ENCODE measurements at regions of chr16 and their contacts with region 1.

Region 1: DNA sequence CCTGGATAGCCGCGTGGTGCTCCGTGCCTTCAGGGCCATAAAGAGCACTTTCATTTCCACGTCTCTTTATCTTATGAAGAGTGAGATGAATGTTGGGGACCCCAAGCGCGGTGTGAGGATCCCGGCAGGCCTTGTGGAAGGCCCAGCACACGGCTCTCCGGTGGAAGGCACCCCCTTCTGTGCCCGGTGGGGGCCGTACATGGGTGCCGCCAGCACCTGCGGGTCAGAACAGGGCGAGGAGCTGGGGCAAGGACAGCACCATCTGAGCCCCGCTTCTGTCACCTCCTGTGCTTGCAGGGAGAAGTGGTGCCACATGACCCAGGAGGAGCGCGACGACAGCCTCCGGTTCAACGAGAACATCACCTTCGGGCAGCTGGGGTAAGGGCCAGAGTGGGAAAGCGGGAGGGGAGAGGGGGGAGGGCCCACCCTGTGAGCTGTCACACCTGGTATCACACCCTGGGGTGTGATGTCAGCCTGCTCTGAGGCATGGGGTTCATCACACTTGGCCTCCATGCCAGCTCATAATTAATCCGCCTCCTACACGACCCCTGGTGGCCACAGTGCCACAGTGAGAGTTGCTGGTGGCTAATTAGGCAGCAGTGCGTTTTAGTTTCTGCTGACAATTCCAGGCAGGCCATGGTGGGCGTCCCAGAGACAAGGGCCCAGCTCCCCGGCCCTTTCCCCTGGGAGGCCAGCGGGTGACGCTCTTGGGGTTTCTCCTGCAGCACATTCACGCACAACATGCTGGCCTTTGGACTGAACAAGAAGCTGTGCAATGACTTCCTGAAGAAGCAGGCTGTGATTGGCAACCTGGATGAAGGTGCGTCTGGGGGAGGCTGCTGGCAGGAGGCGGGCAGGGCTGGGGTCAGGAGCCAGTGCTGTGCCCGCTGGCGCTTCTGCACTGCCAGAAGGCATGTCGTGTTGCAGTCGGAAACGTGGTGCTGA is 25.7 kb downstream of the CIBAR2 start:
- DNase-seq: peak; percentile 86
- ATAC-seq: peak; percentile 34
- H3K4me3 Mint-ChIP-seq: no peak overlapping the region
- H3K27ac Mint-ChIP-seq: no peak overlapping the region
- H3K4me1 Mint-ChIP-seq: peaks cover 42% of the 10 kb centered on the region
- H3K27me3 Mint-ChIP-seq: peaks cover 52% of the 10 kb centered on the region
- CTCF ChIP-seq: peak; percentile 85

Region 2: GRCh38 chr16:84687715-84688114 is 398.9 kb before region 1 on chr16:
- CTCF ChIA-PET with region 1: no interaction called
- POLR2A ChIA-PET with region 1: no interaction called
- DNase-seq: no peak
- ATAC-seq: no peak
- H3K4me3 Mint-ChIP-seq: no peak overlapping the region
- H3K27ac Mint-ChIP-seq: no peak overlapping the region
- H3K4me1 Mint-ChIP-seq: peaks cover 21% of the 10 kb centered on the region
- H3K27me3 Mint-ChIP-seq: peaks cover 3% of the 10 kb centered on the region; the same call in 1 of the 2 replicates
- CTCF ChIP-seq: no peak

Region 3: DNA sequence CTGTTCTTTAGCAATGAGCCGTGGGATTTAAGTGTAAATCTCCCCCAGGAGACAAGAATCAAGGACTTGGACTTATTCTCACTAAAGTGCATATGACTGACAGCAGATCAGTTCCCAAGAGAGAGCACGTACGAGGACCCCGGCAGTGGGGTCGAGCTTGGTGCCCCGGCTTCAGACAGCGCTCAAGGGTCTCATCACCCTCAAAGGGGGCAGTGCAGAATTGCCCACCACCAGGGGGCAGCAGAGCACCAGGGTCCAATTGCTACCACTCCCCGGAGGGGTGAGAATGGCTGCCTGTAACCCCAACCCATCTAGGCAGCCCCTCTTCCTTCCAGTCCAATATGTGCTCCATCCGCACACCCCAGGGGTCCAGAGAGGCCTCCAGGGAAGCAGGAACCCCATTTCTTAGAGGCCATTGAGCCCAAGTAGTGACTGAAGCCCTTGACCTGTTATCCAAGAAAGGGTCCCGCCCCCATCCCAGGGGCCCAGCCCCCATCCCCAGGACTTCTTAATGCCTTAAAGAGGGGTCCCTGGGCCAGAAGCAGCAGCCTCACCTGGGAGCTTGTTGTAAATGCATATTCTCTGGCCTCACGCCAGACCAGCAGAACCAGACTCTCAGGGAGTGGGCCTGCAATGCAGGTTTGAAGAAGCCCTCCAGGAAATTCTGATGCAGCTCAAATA is 161.4 kb before region 1 on chr16:
- CTCF ChIA-PET with region 1: interaction called, 12 read pairs
- POLR2A ChIA-PET with region 1: no interaction called
- DNase-seq: peak; percentile 94
- ATAC-seq: peak; percentile 87
- H3K4me3 Mint-ChIP-seq: no peak overlapping the region
- H3K27ac Mint-ChIP-seq: 0 out of 2 replicates have a peak overlapping the region, but pooled peaks have one; percentile 70
- H3K4me1 Mint-ChIP-seq: peaks cover 14% of the 10 kb centered on the region
- H3K27me3 Mint-ChIP-seq: no peaks in the 10 kb centered on the region
- CTCF ChIP-seq: peak; percentile 96

Region 4: DNA sequence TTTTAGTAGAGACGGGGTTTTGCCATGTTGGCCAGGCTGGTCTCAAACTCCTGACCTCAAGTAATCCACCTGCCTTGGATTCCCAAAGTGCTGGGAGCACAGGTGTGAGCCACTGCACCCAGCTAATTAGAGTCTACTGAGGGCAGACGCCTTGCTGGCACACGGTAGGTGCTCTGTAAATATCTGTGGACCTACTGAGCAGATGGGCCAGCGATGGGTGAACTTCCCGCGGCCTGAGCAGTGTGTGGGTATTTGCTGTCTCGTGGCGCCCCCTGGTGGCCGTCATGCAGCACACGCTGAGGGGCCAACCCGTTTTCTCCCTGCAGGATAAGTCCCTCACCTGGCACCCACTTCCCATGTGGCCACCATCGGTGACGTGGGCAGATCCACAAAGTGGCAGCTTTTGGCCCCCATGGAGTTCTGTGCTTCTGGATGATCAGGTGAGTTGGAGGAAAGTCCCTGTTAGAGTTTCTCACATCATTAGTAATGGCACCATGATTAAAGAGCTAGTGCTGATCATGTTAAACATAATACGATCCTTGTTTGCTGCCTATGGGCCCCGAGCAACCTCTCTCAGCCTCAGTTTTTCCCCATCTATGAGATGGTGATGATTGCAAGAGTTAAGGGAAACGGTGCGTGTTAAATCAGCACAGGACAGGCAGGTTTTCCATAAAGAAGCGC is 116.0 kb before region 1 on chr16:
- CTCF ChIA-PET with region 1: interaction called, 15 read pairs
- POLR2A ChIA-PET with region 1: no interaction called
- DNase-seq: peak; percentile 88
- ATAC-seq: peak; percentile 96
- H3K4me3 Mint-ChIP-seq: no peak overlapping the region
- H3K27ac Mint-ChIP-seq: no peak overlapping the region
- H3K4me1 Mint-ChIP-seq: no peaks in the 10 kb centered on the region
- H3K27me3 Mint-ChIP-seq: no peaks in the 10 kb centered on the region
- CTCF ChIP-seq: peak; percentile 98

Region 5: GRCh38 chr16:85010931-85011845 is 75.4 kb before region 1 on chr16 and contains the start of gene ZDHHC7:
- CTCF ChIA-PET with region 1: interaction called, 13 read pairs
- POLR2A ChIA-PET with region 1: no interaction called
- DNase-seq: peak; percentile 87
- ATAC-seq: peak; percentile 92
- H3K4me3 Mint-ChIP-seq: peak within 1 kb of the TSS; percentile 97
- H3K27ac Mint-ChIP-seq: peak within 1 kb of the TSS; percentile 99
- H3K4me1 Mint-ChIP-seq: peaks cover 9% of the 10 kb centered on the region
- H3K27me3 Mint-ChIP-seq: no peaks in the 10 kb centered on the region
- CTCF ChIP-seq: no peak
- total RNA-seq, gene ZDHHC7: 35.7 to 38.7 TPM (median 38.1 TPM) in 3 replicates

Region 6: DNA sequence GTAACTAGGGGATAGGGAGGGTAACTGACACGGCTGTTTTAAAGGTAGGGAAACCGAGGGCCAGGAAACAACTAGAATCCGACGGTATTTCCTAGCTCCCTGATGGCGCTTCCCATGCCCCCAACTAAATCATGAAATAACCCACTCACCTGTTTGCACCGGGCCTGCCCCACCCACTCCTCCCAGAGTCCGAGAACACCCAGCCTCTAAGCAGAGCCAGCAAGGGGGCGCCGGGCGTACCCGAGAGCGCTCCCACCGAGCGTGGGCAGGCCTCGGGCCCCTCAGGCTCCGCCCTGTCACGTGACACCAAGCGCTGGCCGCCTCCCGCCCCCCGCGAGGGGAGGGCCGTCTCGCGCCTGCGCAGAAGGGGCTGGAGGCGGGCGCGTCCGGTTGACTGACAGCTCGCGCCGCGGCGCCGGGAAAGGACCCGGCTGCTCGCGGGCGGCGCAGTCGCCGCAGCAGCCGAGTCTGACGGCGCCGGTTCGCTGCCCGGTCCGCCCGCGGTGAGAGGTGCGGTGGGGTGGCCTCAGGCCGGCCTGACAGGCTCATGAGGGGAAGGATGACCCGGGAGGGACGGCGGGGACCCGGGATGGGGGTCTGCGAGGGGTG is 59.2 kb before region 1 on chr16 and contains the start of gene KIAA0513:
- CTCF ChIA-PET with region 1: interaction called, 21 read pairs
- POLR2A ChIA-PET with region 1: interaction called, 3 read pairs
- DNase-seq: peak; percentile 91
- ATAC-seq: peak; percentile 86
- H3K4me3 Mint-ChIP-seq: peak within 1 kb of the TSS; percentile 78
- H3K27ac Mint-ChIP-seq: no peak within 1 kb of the TSS
- H3K4me1 Mint-ChIP-seq: peaks cover 21% of the 10 kb centered on the region
- H3K27me3 Mint-ChIP-seq: peaks cover 32% of the 10 kb centered on the region
- CTCF ChIP-seq: no peak
- total RNA-seq, gene KIAA0513: 6.4 to 7.8 TPM (median 7.3 TPM) in 3 replicates

Region 7: GRCh38 chr16:85055503-85056210 is 31.0 kb before region 1 on chr16:
- CTCF ChIA-PET with region 1: interaction called, 38 read pairs
- POLR2A ChIA-PET with region 1: no interaction called
- DNase-seq: no peak
- ATAC-seq: no peak
- H3K4me3 Mint-ChIP-seq: no peak overlapping the region
- H3K27ac Mint-ChIP-seq: peak overlapping the region; percentile 1; the same call in 1 of the 2 replicates
- H3K4me1 Mint-ChIP-seq: peaks cover 17% of the 10 kb centered on the region
- H3K27me3 Mint-ChIP-seq: peaks cover 4% of the 10 kb centered on the region; the same call in 1 of the 2 replicates
- CTCF ChIP-seq: no peak

Region 8: GRCh38 chr16:85104821-85105391 is 18.3 kb after region 1 on chr16:
- CTCF ChIA-PET with region 1: interaction called, 10 read pairs
- POLR2A ChIA-PET with region 1: no interaction called
- DNase-seq: no peak
- ATAC-seq: no peak
- H3K4me3 Mint-ChIP-seq: no peak overlapping the region
- H3K27ac Mint-ChIP-seq: no peak overlapping the region
- H3K4me1 Mint-ChIP-seq: no peaks in the 10 kb centered on the region
- H3K27me3 Mint-ChIP-seq: no peaks in the 10 kb centered on the region; the same call in 1 of the 2 replicates
- CTCF ChIP-seq: no peak

Measured in WTC11 (cell line).